ENCODE measurements at regions of chr3 and their contacts with region 1.

Region 1: DNA sequence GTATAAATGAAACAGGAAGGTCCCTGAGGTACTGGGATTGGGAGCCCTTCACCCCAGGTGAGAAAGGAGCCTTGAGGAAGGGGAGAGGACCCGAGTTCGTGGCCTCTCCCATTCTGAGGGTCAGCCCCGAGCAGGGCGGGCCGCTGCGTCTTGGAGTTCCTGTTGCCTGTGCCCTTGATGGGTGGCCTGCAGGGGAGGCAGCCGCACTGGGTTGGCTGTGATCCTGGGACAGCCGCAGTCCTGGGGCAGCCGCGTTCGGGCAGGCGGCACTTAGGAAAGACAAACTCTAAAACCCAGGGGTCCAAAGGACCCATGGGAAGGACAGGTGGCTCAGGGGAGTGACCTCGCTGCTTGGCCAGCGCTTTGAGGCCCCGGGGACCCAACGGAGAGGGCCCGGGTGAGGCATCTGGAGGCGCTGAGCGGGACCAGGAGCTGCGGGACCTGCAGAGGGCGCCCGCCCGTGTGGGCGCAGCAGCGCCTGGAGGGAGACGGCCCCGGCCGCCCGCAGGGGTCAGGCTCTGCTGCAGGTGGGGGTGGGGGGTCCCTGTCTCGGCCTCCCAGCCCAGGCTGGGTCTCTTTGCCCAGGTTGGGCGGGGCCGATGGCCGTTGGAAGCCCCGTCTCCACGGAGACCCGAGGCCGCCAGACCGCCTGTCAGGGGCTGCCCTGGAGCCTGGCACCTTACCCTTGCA is 65.1 kb downstream of the HMCES start:
- DNase-seq: no peak
- H3K4me3 ChIP-seq: peak overlapping the region in 1 of 3 experiments; percentile 22
- H3K27ac ChIP-seq: no peak overlapping the region
- H3K4me1 ChIP-seq: peaks cover 8% of the 10 kb centered on the region
- H3K27me3 ChIP-seq: peaks cover 2% of the 10 kb centered on the region
- CTCF ChIP-seq: peak; percentile 16 to 66

Region 2: GRCh38 chr3:129409541-129409940 is 65.8 kb after region 1 on chr3:
- CTCF ChIA-PET with region 1: no interaction called
- dilution Hi-C with region 1: loop called (anchors 5 kb)
- in situ Hi-C with region 1: no loop called
- intact Hi-C with region 1: no loop called
- DNase-seq: no peak
- H3K4me3 ChIP-seq: no peak overlapping the region
- H3K27ac ChIP-seq: no peak overlapping the region
- H3K4me1 ChIP-seq: peaks cover 4% of the 10 kb centered on the region
- H3K27me3 ChIP-seq: no peaks in the 10 kb centered on the region
- CTCF ChIP-seq: no peak

Region 3: GRCh38 chr3:129526121-129526900 is 182.5 kb after region 1 on chr3:
- CTCF ChIA-PET with region 1: no interaction called
- dilution Hi-C with region 1: loop called (anchors 5 kb)
- in situ Hi-C with region 1: no loop called
- intact Hi-C with region 1: no loop called
- DNase-seq: no peak
- H3K4me3 ChIP-seq: no peak overlapping the region
- H3K27ac ChIP-seq: no peak overlapping the region
- H3K4me1 ChIP-seq: no peaks in the 10 kb centered on the region
- H3K27me3 ChIP-seq: peaks cover 2% of the 10 kb centered on the region
- CTCF ChIP-seq: no peak